Left cardiac atrium (tissue), 4 donors: ENCODE measurements at regions of chr6 and their contacts with region 1.

Region 1: DNA sequence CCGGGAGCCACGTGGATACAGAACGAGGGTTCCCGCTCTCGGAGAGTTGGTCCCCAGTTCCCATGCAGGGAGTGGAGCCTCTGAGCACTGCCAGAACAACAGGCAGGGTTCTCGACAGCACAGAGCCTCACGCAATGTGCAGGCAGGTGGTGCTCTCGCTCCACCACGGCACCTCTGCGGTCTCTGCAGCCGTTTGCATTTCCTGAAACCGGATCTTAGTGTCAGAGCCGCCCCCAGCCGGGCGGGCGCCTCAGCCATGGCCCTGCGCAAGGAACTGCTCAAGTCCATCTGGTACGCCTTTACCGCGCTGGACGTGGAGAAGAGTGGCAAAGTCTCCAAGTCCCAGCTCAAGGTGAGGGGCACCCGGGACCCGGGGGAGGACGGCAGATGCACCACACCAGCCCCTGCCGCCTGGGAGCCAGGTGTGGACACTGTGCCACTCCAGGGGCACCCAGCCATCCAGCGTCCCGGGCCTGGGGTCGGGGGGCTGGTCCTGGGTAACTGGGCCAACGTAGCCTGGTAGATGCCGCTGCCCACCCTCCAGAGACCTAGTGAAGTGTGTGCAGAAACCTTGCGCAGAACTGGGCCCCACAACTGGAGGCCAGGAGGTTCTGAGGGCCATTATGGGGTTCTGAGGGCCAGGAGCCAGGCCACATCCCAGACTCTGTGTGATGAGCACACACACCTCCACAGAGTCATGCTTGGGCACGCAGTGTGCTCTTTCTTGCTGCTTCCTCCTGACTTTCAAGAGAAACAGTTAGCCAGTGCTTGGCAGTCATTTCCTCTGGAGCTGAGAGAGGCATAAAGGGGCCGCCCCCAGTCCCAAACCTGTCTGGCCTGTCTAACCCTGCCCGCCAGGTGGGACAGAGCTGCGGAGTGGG is at the start of gene DEF6:
- DNase-seq: peak; percentile 86
- ATAC-seq: peak; percentile 87 to 93
- total RNA-seq, gene DEF6: 2.5 to 4.7 TPM

Region 2: GRCh38 chr6:35327349-35328027 is 29.6 kb after region 1 on chr6:
- intact Hi-C with region 1: loop called (anchors 1 to 2 kb)
- DNase-seq: peak; percentile 64
- ATAC-seq: peak; percentile 84 to 91

Region 3: DNA sequence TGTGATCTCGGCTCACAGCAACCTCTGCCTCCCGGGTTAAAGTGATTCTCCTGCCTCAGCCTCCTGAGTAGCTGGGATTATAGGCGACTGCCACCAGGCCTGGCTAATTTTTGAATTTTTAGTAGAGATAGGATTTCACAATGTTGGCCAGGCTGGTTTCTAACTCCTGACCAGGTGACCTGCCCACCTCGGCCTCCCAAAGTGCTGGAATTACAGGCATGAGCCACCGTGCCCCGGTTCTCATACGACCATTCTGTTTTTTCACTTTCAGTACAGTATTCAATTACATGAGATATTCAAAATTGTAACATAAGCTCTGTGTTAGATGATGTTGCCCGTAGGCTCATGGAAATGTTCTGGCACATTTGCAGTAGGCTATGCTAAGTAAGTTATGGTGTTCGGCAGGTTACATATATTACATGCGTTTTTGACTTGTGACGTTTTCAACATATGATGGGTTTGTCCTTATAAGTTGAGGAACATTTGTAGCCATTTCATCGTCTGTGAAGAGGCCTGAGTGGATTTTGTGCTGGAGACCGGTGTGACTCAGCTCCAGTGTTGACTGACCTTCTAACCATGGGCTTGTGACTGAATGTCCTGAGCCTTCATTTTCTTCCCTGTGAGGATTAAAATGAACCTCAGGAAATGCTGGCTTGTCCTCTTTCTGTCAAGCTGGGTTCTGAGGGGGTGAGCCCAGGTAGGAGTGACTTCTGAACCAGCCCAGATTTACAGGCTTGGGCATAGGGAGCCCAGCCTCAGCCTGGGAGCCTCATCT is 56.7 kb after region 1 on chr6:
- intact Hi-C with region 1: no loop called
- DNase-seq: no peak
- ATAC-seq: no peak

Region 4: DNA sequence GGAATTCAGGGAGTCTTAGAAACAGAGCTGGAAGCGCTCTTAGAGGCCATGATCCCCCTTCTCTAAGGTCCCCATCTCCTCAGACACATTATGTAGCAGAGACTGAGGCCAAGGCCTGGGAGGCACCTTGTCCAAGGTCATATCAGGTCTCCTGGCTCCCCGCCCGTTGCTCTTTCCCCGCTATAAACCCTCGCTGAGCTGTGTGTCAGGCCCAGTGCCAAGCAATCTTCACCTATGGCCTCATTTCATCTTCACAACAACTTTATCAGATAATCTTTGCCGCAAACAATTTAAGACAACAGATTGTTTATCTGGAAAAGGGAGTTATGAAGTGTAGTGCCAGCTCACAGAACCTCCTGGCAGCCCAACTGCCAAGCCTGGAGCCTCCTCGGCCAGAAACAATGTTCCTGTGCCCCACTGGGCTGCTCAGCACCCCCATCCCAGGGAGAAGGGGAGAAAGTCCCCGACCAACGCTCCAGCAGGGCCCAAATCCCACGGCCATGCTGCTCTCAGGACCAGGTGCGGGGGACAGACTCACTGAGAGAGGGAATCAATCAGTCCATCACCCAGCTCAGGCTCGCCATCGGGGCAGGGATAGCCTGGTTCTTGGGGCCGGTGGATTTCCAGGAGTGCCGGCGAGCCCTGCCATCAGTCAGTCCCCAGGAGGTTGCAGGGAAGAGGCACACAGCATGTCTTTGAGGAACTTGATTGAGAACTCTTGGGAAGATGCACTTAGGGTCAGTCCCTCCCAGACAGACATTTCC is 137.4 kb after region 1 on chr6:
- intact Hi-C with region 1: loop called in 1 of 2 experiments (anchors 5 kb)
- DNase-seq: peak; percentile 36
- ATAC-seq: peak; percentile 63 to 79